HepG2 (cell line): ENCODE measurements at regions of chr14 and their contacts with region 1.

Region 1: DNA sequence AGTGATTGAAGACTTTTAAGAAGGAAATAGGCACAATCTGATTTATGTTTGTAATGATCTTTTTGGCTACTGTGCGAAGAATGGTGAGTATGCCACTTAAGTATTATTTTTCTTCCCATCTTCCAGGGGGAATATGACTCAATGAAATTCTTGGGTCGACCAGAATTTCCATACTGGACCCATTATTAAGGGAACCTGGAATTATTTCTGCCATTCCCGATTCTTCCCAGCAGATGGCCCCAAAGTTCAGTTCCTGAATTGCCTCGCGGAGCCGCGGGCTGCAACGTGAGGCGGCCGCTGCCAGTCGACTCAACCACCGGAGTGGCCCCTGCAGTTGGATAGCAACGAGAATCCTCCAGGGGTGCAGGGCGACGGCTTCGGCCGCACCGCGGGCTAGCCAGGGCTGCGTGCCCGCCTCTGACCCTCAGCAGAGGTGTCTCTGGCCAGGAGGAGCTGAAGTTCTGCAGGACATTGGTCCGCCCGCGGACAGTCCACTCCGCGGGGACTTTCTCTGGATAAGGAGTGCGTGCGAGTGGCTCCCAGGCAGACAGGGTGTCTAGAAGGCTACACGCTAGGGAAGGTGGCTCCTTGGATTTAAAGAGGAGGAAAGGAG is 628 bp upstream of the TSHR start:
- DNase-seq: peak; percentile 68
- ATAC-seq: peak; percentile 98
- H3K4me3 ChIP-seq: peak overlapping the region; percentile 47 to 77 (median 54); a peak in 5 of 6 replicates
- H3K27ac ChIP-seq: no peak overlapping the region
- H3K4me1 ChIP-seq: peaks cover 10% of the 10 kb centered on the region
- H3K27me3 ChIP-seq: peaks cover 4 to 22% of the 10 kb centered on the region in 2 experiments; a peak in 3 of 5 replicates
- CTCF ChIP-seq: peak; percentile 86
- EP300 ChIP-seq: no peak
- POLR2A ChIP-seq: no peak
- RAD21 ChIP-seq: peak; percentile 80

Region 2: DNA sequence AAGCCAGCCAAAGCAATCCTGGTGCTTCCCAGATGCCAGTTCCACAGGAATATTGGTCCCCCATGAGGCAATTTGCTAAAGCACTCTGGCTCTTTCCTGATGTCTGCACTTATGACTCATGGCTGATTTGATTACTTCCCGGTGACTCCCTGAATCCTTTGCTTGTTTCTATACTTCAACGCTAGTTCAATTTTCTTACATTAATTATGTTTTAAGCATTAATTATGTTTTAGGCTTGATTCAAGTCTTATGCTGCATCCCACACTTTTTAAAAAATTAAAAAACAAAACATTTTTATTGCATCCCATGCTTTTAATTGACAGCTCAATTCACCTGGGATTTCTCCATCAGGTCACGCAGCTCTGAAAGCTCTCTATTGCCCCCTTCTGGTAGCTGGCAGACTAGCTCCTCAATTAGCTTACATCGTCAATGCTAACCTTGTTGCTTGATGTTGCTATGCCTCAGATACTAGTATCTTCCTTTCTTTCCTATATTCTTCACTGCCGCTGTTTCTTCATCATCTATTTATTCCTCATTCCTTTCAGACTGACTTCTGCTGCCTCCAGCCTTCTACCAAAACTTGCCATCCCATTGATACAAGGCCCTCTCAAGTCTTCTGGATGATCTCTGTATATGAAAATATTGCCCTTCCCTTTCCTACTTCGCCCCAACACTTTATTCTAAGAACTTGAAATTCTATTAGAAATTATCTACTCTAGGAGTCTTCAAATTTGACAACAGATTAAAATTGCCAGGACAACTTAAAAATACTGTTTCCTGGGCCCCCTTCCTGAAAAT is 32.6 kb after region 1 on chr14:
- CTCF ChIA-PET with region 1: interaction called, 30 read pairs
- POLR2A ChIA-PET with region 1: no interaction called
- in situ Hi-C with region 1: no loop called
- intact Hi-C with region 1: loop called (anchors 1 kb)
- DNase-seq: peak; percentile 45
- ATAC-seq: peak; percentile 79
- H3K4me3 ChIP-seq: no peak overlapping the region
- H3K27ac ChIP-seq: no peak overlapping the region
- H3K4me1 ChIP-seq: no peaks in the 10 kb centered on the region
- H3K27me3 ChIP-seq: peaks cover 0 to 7% of the 10 kb centered on the region in 2 experiments; a peak in 1 of 5 replicates
- CTCF ChIP-seq: peak; percentile 80
- EP300 ChIP-seq: no peak
- POLR2A ChIP-seq: no peak
- RAD21 ChIP-seq: no peak; the same call in 1 of the 2 replicates

Region 3: GRCh38 chr14:81170104-81170828 is 215.5 kb after region 1 on chr14:
- CTCF ChIA-PET with region 1: no interaction called
- POLR2A ChIA-PET with region 1: no interaction called
- in situ Hi-C with region 1: no loop called
- intact Hi-C with region 1: loop called (anchors 1 kb)
- DNase-seq: peak; percentile 84
- ATAC-seq: peak; percentile 98
- H3K4me3 ChIP-seq: peak overlapping the region; percentile 68 to 87 (median 80)
- H3K27ac ChIP-seq: peak overlapping the region; percentile 91
- H3K4me1 ChIP-seq: peaks cover 29% of the 10 kb centered on the region
- H3K27me3 ChIP-seq: no peaks in the 10 kb centered on the region
- CTCF ChIP-seq: peak; percentile 84
- EP300 ChIP-seq: no peak
- POLR2A ChIP-seq: peak; percentile 94 to 96
- RAD21 ChIP-seq: peak; percentile 69

Region 4: DNA sequence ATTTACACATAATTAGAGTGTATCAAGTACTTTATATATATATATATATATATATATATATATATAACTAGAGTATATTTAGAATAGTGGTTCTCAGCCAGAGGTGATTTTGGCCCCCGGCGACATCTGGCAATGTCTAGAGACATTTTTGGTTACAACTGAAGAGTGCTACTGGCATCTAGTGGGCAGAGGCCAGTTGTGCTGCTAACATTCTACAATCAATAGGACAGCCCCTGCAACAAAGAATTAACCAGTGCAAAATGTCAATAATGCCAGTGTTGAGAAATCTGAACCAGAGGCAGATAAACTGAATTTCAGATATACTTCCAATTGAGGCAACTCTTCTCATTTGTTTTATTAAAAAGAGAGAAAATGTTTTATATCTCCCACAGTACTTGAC is 257.1 kb after region 1 on chr14:
- CTCF ChIA-PET with region 1: no interaction called
- POLR2A ChIA-PET with region 1: no interaction called
- in situ Hi-C with region 1: no loop called
- intact Hi-C with region 1: loop called (anchors 2 kb)
- DNase-seq: peak; percentile 35
- ATAC-seq: peak; percentile 71
- H3K4me3 ChIP-seq: no peak overlapping the region
- H3K27ac ChIP-seq: no peak overlapping the region
- H3K4me1 ChIP-seq: no peaks in the 10 kb centered on the region
- H3K27me3 ChIP-seq: no peaks in the 10 kb centered on the region
- CTCF ChIP-seq: peak; percentile 48
- EP300 ChIP-seq: no peak
- POLR2A ChIP-seq: no peak
- RAD21 ChIP-seq: no peak